Activated B cell treated with CpG ODN at 0.5 μM for 24 hours (primary cell): ENCODE measurements at regions of chr18 and their contacts with region 1.

Region 1: DNA sequence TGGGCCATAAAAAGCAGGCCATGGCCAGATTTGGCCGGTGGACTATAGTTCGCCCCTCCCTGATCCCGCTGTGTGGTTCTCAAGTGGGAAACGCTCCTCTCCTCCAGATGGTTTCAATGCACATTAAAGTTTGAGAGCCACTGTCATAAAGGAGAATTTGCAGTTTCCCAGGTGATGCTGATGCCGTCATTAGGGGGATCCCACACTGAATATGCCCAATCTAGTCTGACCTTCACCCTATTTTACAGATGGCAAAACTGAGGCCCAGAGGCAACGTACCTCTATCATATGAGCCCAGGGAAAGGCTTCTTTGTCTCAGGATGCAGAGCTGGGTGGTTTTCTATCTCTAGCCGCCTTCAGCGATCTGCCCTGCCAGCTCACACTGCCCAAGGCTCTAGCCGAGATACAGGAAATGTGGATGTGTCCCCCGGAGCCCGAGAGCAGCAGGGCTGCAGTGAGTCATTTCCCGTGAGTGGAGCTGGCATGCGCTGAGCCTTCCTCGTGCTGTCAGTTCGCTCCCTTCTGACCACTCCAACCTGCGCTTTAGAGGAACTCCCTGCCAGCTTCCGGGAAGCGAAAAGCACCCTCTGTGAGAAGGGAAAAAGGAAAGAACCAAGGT is 116.2 kb downstream of the SMAD7 start:
- DNase-seq: peak; percentile 42
- ATAC-seq: peak; percentile 83
- H3K4me3 Mint-ChIP-seq: peak overlapping the region; percentile 76
- H3K27ac Mint-ChIP-seq: peak overlapping the region; percentile 80
- H3K4me1 Mint-ChIP-seq: peaks cover 37% of the 10 kb centered on the region
- H3K27me3 Mint-ChIP-seq: no peaks in the 10 kb centered on the region
- CTCF ChIP-seq: no peak

Region 2: GRCh38 chr18:48820483-48821250 is 13.9 kb before region 1 on chr18:
- CTCF ChIA-PET with region 1: no interaction called
- POLR2A ChIA-PET with region 1: interaction called, 5 read pairs
- intact Hi-C with region 1: loop called (anchors 1 kb)
- DNase-seq: peak; percentile 33
- ATAC-seq: peak; percentile 98
- H3K4me3 Mint-ChIP-seq: peak overlapping the region; percentile 4
- H3K27ac Mint-ChIP-seq: peak overlapping the region; percentile 32
- H3K4me1 Mint-ChIP-seq: peaks cover 18% of the 10 kb centered on the region
- H3K27me3 Mint-ChIP-seq: no peaks in the 10 kb centered on the region
- CTCF ChIP-seq: no peak

Region 3: DNA sequence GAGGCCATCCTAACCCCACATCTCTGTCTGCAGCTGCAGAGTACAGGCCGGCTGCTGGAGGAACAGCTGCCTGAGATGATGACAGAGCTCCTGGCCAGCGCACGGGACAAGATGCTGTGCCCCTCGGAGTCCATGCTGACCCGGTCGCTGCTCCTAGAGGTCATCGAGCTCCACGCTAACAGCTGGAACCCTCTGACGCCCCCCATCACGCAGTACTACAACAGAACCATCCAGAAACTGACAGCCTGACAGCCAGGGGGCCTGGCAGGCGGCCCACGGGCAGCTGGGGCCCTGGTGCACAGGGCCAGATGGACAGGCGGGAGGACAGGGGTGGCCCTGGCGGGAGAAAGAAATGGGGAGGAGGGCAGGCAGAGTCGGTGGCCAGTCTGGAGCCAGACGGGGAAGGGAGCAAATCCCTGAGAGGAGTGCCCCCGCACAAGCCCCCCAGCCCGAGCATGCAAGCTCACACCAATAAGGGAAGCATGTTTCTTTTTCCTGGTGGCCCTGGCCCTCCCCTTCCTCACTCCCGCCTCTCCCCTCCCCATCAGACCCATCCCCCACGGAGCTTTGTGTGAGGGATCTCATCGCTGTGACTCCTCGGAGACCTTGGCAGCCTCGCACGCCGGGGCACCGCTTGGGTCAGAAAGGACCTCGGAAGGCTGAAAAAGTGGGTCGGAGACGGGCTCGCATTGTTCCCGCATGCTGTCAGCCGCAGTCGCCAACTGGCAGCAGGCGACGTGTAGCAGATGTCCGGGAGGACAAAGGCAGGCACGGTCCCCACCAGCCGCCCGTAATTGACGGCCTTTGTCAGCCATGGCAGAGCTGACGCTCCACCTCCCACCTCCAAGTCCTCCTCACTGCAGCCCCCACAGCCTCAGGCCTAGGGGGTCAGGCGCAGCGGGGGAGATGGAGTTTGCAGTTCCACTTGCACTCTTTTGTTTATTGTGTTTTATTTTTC is 25.1 kb after region 1 on chr18:
- CTCF ChIA-PET with region 1: no interaction called
- POLR2A ChIA-PET with region 1: no interaction called
- intact Hi-C with region 1: no loop called
- DNase-seq: no peak
- ATAC-seq: no peak
- H3K4me3 Mint-ChIP-seq: no peak overlapping the region
- H3K27ac Mint-ChIP-seq: no peak overlapping the region
- H3K4me1 Mint-ChIP-seq: no peaks in the 10 kb centered on the region
- H3K27me3 Mint-ChIP-seq: no peaks in the 10 kb centered on the region
- CTCF ChIP-seq: no peak